GM12878 (cell line): ENCODE measurements at regions of chr21 and their contacts with region 1.

Region 1: GRCh38 chr21:42258153-42258884 is 39.4 kb downstream of the ABCG1 start:
- DNase-seq: no peak
- ATAC-seq: peak; percentile 97
- H3K4me3 ChIP-seq: no peak overlapping the region
- H3K27ac ChIP-seq: no peak overlapping the region
- H3K4me1 ChIP-seq: no peaks in the 10 kb centered on the region
- H3K27me3 ChIP-seq: no peaks in the 10 kb centered on the region; a peak in 1 of 4 replicates
- CTCF ChIP-seq: peak; percentile 90 to 97 (median 90)
- EP300 ChIP-seq: no peak
- POLR2A ChIP-seq: no peak
- RAD21 ChIP-seq: peak; percentile 93

Region 2: DNA sequence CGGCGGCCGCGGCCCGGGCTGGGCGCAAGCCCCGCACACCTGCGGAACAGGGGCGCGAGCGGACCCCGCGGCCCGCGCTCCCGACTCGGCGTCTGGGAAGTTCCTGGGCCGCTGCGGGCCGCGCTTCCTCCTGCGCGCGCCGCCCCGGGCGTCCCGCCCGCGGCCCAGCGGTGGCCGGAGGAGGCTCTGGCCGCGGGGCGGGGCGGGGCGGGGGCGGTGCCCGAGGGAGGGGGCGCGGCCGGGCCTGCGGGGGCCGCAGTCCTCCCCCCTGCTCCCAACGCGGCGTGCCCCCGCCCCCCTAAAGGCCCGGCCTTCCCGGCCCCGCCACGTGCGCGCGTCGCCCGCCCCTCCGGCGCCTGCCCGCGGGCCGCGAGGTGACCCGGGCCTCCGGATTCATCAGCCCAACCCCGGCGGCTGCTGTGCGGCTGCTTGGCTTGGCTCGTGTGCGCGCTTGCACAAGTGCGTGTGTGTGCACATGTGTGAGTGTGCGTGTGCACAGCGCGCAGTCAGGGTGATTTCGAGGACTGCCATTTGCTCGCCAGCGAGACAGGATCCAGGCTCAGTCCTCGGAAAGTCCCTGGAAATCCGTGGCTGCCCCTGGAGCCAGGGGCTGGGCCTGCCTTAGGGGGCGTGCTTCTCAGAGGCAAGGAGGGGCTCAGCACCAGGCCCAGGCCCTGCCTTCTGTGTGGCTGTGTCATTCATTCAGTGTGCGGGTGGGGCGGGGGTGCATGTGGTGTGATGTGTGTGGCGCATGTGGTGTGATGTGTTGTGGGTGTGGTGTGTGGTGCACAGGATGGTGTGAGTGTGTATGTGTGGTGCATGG is 304.3 kb before region 1 on chr21 and contains the start of gene C2CD2:
- CTCF ChIA-PET with region 1: no interaction called
- POLR2A ChIA-PET with region 1: no interaction called
- RAD21 ChIA-PET with region 1: no interaction called
- SMC1A ChIA-PET with region 1: no interaction called
- in situ Hi-C with region 1: no loop called
- intact Hi-C with region 1: no loop called
- DNase-seq: no peak
- ATAC-seq: peak; percentile 65
- H3K4me3 ChIP-seq: peak within 1 kb of the TSS; percentile 78
- H3K27ac ChIP-seq: peak within 1 kb of the TSS; percentile 48
- H3K4me1 ChIP-seq: peaks cover 37% of the 10 kb centered on the region
- H3K27me3 ChIP-seq: no peaks in the 10 kb centered on the region
- CTCF ChIP-seq: no peak
- EP300 ChIP-seq: no peak; a peak in 1 of 4 replicates
- POLR2A ChIP-seq: peak; percentile 56
- RAD21 ChIP-seq: no peak
- polyA plus RNA-seq, gene C2CD2: 2.2 to 2.9 TPM

Region 3: DNA sequence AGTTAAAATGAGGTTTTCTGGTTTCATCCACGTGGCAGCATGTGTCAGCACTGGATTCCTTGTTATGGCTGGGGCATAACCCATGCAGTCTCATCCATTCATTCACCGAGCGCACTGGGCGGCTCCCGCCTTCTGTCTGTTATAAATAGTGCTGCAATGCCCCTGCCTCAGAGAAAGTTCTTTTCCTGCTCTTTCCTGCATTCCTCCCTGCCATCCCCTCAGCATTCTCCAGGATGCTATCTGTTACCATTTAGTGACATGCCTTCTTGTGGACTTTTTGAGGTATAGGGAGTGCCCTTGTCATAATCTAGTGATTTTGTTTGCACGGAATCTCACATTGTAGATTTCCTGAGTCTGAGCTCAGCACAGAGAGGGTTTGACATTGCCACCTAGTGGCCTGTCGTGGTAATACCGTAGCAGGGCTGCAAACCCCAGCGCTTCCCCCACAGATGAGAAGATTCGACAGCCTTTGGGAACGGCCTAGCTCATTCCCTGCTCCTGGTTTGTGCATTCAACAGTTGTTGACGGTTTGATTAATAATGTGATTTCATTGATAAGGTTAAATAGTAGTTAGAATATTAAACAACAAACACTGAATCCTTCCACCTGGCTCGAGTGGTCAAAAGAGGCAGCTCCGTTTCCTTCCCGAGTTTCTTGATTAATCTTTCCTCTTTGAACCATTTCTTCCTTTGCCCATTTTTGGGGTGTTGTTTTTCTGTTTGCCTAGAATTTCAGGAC is 140.9 kb before region 1 on chr21:
- CTCF ChIA-PET with region 1: interaction called, 10 read pairs
- POLR2A ChIA-PET with region 1: no interaction called
- RAD21 ChIA-PET with region 1: interaction called, 4 read pairs
- SMC1A ChIA-PET with region 1: interaction called, 4 read pairs
- in situ Hi-C with region 1: no loop called
- intact Hi-C with region 1: no loop called
- DNase-seq: peak; percentile 37
- ATAC-seq: peak; percentile 88
- H3K4me3 ChIP-seq: peak overlapping the region; percentile 38; the same call in 1 of the 2 replicates
- H3K27ac ChIP-seq: 0 out of 2 replicates have a peak overlapping the region, but pooled peaks have one; percentile 3
- H3K4me1 ChIP-seq: peaks cover 37% of the 10 kb centered on the region
- H3K27me3 ChIP-seq: peaks cover 0 to under 1% of the 10 kb centered on the region in 2 experiments; a peak in 2 of 4 replicates
- CTCF ChIP-seq: peak; percentile 90 to 93 (median 91)
- EP300 ChIP-seq: no peak
- POLR2A ChIP-seq: no peak
- RAD21 ChIP-seq: peak; percentile 88

Region 4: DNA sequence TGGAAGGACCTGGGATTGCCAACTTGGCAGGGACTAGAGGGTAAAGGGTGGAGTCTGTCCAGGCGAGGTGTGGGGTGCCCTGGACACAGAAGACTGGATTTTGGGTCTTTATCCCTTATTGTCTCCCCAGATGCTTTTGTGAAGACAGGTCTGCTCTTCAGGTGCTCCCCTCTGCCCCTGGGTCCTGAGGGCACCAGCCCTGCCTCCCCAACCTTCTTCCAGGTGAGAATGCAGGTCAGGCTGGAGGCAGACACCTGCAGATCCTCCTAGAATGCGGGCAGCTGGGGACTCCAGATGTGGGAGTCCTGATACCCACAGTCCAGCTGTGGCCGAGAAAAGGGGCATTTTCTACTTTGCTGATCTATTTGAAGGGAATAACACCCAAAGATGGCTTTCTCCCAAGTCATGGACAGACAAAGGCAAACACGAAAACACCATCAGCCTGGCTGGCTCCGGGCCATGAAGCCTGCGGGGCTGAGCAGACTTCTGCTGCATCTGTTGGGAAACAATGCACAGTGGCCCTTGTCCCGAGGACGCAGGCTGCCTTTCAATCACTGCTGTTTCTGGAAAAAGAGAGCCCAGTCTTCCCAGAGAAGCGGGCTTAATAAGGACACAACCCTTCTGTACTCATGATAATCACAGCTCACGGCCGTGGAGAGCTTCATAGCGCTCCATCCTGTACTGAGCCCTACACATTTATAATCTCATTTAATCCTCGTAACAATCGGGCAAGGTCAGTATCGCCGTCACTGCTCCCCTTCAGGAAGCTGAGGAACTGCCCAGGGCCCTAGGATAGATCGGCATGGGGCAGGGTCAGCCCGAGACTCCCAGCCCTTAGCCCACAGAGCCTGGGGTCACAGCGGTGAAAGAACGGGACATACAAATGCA is 101.4 kb before region 1 on chr21:
- CTCF ChIA-PET with region 1: interaction called, 26 read pairs
- POLR2A ChIA-PET with region 1: no interaction called
- RAD21 ChIA-PET with region 1: interaction called, 11 read pairs
- SMC1A ChIA-PET with region 1: interaction called, 13 read pairs
- in situ Hi-C with region 1: no loop called
- intact Hi-C with region 1: no loop called
- DNase-seq: no peak
- ATAC-seq: no peak
- H3K4me3 ChIP-seq: no peak overlapping the region
- H3K27ac ChIP-seq: no peak overlapping the region
- H3K4me1 ChIP-seq: no peaks in the 10 kb centered on the region
- H3K27me3 ChIP-seq: peaks cover 0 to 3% of the 10 kb centered on the region in 2 experiments; a peak in 3 of 4 replicates
- CTCF ChIP-seq: no peak
- EP300 ChIP-seq: no peak
- POLR2A ChIP-seq: no peak
- RAD21 ChIP-seq: no peak

Region 5: DNA sequence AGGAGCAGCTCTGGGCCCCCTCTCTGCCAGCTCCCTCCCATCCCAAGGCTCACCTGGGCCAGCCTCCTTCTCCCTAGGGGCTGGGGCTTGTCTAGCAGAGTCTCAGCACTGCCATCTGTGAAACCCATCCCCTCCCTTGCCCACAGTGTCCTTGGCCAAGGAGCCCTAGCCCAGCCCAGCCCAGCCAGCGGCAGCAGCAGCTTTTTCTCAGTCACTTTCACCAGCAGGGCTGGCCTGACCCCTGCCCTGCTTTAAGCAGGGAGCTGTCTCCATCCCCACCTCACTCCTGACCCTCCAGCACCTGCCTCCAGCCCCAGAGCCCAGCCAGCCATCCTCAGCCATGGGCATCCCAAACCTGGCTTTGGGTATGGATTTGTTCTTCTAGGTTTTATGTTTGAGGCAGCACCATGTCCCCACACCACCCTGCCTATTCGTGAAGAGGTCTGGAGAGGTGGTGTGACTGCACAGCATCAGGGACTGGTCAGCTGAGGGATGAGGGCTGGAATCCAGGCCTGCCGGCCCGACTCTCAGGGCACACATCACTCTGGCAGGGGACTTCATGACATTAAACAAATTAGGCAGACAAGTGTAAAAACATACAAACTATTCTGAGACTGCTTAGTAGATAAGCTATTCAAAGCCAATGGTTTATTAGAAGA is 75.5 kb before region 1 on chr21:
- CTCF ChIA-PET with region 1: interaction called, 19 read pairs
- POLR2A ChIA-PET with region 1: no interaction called
- RAD21 ChIA-PET with region 1: interaction called, 12 read pairs
- SMC1A ChIA-PET with region 1: interaction called, 12 read pairs
- in situ Hi-C with region 1: no loop called
- intact Hi-C with region 1: no loop called
- DNase-seq: no peak
- ATAC-seq: no peak
- H3K4me3 ChIP-seq: no peak overlapping the region
- H3K27ac ChIP-seq: no peak overlapping the region
- H3K4me1 ChIP-seq: peaks cover 6% of the 10 kb centered on the region
- H3K27me3 ChIP-seq: no peaks in the 10 kb centered on the region
- CTCF ChIP-seq: no peak
- EP300 ChIP-seq: no peak
- POLR2A ChIP-seq: no peak
- RAD21 ChIP-seq: no peak

Region 6: GRCh38 chr21:42227909-42228708 is 30.2 kb before region 1 on chr21:
- CTCF ChIA-PET with region 1: interaction called, 151 read pairs
- POLR2A ChIA-PET with region 1: interaction called, 11 read pairs
- RAD21 ChIA-PET with region 1: interaction called, 46 read pairs
- SMC1A ChIA-PET with region 1: interaction called, 34 read pairs
- in situ Hi-C with region 1: no loop called
- intact Hi-C with region 1: no loop called
- DNase-seq: peak; percentile 85
- ATAC-seq: peak; percentile 92
- H3K4me3 ChIP-seq: no peak overlapping the region
- H3K27ac ChIP-seq: peak overlapping the region; percentile 22
- H3K4me1 ChIP-seq: peaks cover 31% of the 10 kb centered on the region
- H3K27me3 ChIP-seq: no peaks in the 10 kb centered on the region
- CTCF ChIP-seq: no peak
- EP300 ChIP-seq: peak in 1 of 2 experiments; percentile 55; a peak in 1 of 4 replicates
- POLR2A ChIP-seq: no peak
- RAD21 ChIP-seq: no peak

Region 7: DNA sequence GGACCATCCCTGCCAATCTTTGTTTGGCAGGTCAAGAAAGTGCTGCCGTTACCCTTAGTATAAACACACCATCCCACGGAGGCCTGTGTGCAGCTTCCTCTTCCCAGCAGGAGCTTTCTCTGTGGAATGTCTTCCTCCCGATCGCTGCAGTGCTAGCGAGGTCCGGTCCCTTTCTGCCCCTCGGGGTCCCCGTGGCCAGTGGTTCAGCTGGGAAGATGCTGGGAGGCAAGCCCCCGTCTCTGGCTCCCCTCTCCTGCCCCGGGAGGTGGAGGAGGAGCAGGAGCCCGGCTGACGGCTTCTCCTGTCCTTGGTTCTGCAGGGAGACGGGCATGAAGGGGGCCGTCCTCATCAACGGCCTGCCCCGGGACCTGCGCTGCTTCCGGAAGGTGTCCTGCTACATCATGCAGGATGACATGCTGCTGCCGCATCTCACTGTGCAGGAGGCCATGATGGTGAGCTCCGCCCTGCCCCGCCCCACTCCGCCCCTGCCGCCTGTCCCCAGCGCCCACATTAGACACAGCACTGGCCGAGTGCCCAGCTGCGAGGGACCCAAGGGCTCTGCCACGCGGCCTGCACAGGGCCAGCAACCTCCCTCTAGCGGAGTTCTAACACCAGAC is 14.8 kb after region 1 on chr21:
- CTCF ChIA-PET with region 1: interaction called, 45 read pairs
- POLR2A ChIA-PET with region 1: interaction called, 3 read pairs
- RAD21 ChIA-PET with region 1: interaction called, 13 read pairs
- SMC1A ChIA-PET with region 1: interaction called, 6 read pairs
- in situ Hi-C with region 1: no loop called
- intact Hi-C with region 1: no loop called
- DNase-seq: no peak
- ATAC-seq: no peak
- H3K4me3 ChIP-seq: no peak overlapping the region
- H3K27ac ChIP-seq: no peak overlapping the region
- H3K4me1 ChIP-seq: no peaks in the 10 kb centered on the region
- H3K27me3 ChIP-seq: no peaks in the 10 kb centered on the region
- CTCF ChIP-seq: no peak
- EP300 ChIP-seq: no peak
- POLR2A ChIP-seq: no peak
- RAD21 ChIP-seq: no peak